Dendritic cell treated with granulocyte-macrophage colony-stimulating factor and Interleukin-4, amounts not matched to agents 40 ng/mL and 50 ng/mL, for 4 days (primary cell): ENCODE measurements at regions of chr22 and their contacts with region 1.

Region 1: GRCh38 chr22:46071451-46072109 is 78.7 kb upstream of the PPARA start:
- H3K4me3 Mint-ChIP-seq: peak overlapping the region; percentile 91
- H3K27ac Mint-ChIP-seq: peak overlapping the region; percentile 87
- H3K4me1 Mint-ChIP-seq: peaks cover 69% of the 10 kb centered on the region
- H3K27me3 Mint-ChIP-seq: no peaks in the 10 kb centered on the region

Region 2: DNA sequence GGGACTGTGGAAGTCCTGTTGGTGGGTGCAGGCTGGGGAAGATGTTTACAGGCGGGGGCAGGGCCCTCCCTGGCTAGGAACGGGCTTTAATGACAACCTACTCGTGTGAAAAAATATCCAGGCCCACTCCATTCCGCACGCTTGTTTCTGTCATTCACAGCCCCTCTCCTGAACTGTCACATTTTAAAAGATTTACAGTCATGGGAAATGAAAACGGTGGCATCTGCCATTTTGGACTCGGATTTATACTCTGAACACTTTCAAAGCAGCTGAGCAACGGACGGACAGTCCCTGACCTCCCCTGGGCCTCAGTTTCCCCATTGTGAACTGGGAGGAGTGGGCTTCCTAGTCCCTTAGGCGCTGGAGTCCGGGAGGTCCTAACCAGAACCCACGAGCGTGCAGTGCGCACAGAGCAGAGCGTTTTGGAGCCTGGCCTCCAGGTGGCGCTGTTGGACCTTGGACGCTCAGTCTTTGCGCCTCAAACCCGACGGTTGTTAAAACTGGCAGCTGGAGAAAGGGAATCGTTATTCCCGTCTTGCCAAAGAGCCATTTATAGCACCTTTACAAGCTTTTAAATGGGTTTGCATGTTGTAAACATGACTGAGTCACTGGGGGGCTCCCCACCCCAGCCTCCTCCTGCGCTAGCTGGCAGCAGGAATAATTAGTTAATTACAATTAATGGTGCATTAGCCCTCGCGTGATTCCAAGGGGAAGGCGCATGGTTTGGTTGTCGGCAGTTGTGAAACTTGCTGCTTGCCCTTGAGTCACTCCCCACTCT is 493.6 kb before region 1 on chr22:
- intact Hi-C with region 1: no loop called
- H3K4me3 Mint-ChIP-seq: no peak overlapping the region
- H3K27ac Mint-ChIP-seq: no peak overlapping the region
- H3K4me1 Mint-ChIP-seq: peaks cover 25% of the 10 kb centered on the region
- H3K27me3 Mint-ChIP-seq: peaks cover 55% of the 10 kb centered on the region

Region 3: DNA sequence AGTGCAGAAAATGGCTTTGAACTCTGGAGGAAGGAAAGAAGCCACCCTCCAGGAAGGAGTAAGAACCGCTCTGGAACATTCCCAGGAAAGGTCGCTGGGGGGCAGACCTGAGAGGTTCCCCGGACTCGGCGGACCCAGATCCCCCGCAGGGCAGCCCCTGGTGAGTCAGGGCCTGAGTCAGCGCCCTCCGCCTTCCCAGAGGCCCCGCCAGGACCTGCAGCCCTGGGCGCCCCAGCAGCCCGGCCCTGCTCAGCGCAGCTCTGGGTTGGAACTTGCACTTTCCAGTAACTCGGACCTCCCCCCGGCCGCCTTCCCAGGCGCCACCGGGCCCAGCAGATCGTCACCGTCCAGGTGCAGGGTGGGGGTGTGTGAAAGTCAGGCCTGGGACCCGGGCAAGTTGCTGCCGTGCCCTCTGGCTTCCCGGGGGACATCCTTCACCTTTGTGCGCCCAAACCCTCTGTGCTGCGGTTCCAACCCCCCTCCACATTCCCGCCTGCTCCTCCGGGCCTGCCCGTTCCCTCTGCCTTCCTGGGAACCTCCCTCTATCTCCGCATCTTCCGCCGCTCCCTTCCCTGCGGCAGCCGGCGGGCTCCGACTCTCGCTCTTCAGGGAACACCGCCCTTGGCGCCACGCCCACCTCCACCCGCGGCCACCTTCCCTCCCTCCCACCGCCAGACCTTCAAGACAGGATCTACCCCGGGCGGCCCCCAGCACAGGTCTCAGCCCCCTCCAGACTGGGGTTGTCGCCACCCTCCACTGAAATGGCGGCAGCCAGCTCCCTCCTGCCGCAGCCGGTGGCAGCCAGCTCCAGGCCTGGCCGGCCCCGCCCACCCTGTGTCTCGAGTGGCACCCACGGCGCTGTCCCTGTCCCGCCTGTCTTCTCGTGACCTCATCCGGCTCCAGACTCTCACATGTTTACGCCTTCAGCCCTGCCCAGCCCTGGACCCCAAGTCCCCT is 57.8 kb before region 1 on chr22:
- intact Hi-C with region 1: loop called (anchors 2 kb)
- H3K4me3 Mint-ChIP-seq: peak overlapping the region; percentile 87
- H3K27ac Mint-ChIP-seq: peak overlapping the region; percentile 96
- H3K4me1 Mint-ChIP-seq: peaks cover 41% of the 10 kb centered on the region
- H3K27me3 Mint-ChIP-seq: no peaks in the 10 kb centered on the region

Region 4: GRCh38 chr22:46035742-46036557 is 35.6 kb before region 1 on chr22:
- intact Hi-C with region 1: loop called (anchors 5 kb)
- H3K4me3 Mint-ChIP-seq: peak overlapping the region; percentile 87
- H3K27ac Mint-ChIP-seq: peak overlapping the region; percentile 91
- H3K4me1 Mint-ChIP-seq: peaks cover 36% of the 10 kb centered on the region
- H3K27me3 Mint-ChIP-seq: no peaks in the 10 kb centered on the region

Region 5: GRCh38 chr22:46054091-46055073 is 17.2 kb before region 1 on chr22:
- intact Hi-C with region 1: loop called (anchors 2 kb)
- H3K4me3 Mint-ChIP-seq: peak overlapping the region; percentile 94
- H3K27ac Mint-ChIP-seq: peak overlapping the region; percentile 96
- H3K4me1 Mint-ChIP-seq: peaks cover 79% of the 10 kb centered on the region
- H3K27me3 Mint-ChIP-seq: no peaks in the 10 kb centered on the region

Region 6: GRCh38 chr22:46390652-46391301 is 319.2 kb after region 1 on chr22:
- intact Hi-C with region 1: no loop called
- H3K4me3 Mint-ChIP-seq: no peak overlapping the region
- H3K27ac Mint-ChIP-seq: no peak overlapping the region
- H3K4me1 Mint-ChIP-seq: no peaks in the 10 kb centered on the region
- H3K27me3 Mint-ChIP-seq: no peaks in the 10 kb centered on the region